ENCODE measurements at regions of chr11 and their contacts with region 1.

Region 1: DNA sequence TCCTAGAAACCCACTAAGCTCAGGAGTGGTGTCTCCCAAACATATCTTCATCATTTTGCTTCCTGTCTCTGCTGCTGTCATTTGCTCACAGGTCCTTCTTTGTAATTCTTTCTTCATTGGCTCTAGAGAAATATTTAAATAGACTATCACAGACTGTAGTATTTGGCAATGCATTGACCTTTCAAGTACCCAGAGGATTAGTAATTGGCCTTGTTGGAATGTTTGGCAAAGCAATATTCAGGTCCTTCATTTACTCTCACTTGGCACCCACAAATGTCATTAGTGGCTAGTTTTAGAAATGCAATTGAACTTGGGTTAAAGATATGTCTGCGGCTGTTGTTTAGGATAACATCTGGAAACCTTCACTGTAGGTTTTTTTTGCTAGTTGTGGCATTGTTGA is 11.6 kb downstream of the OR4C5 start:
- DNase-seq: no peak

Region 2: GRCh38 chr11:50030193-50030592 is 1675.5 kb after region 1 on chr11:
- in situ Hi-C with region 1: loop called (anchors 5 kb)
- DNase-seq: no peak

Measured in Caki2 (cell line).